OCI-LY7 (cell line): ENCODE measurements at regions of chr6 and their contacts with region 1.

Region 1: DNA sequence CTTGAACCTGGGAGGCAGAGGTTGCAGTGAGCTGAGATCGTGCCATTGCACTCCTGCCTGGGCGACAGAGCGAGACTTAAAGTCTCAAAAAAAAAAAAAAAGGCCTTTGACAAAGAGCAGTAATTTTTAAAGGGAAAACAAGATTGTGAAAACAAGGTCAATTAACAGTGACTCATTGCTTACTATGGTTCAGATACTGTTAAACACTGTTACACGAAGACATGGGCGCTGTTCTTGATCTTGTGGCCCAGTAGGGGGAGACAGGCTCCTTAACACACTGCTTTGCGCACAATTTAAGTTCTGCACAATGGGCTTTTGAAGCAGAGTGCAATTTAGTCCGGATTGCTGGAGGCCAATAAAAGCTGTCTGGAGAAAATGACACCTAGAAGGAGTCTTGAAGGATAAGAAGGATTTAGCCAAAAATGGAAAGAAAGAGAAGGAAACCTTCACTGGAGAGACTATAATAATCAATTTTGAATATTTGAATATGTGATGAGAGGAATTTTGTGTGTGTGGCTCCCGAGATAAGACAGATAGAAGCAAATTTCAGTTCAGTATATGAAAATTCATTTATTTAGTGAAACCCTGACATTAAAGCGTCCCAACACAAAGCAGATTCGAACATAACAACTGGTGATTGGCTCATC is 6.0 kb upstream of the LATS1 start:
- DNase-seq: peak; percentile 72
- H3K4me3 ChIP-seq: no peak overlapping the region
- H3K27ac ChIP-seq: no peak overlapping the region
- H3K4me1 ChIP-seq: no peaks in the 10 kb centered on the region
- CTCF ChIP-seq: peak; percentile 92

Region 2: GRCh38 chr6:149534742-149535141 is 189.2 kb before region 1 on chr6:
- CTCF ChIA-PET with region 1: no interaction called
- POLR2A ChIA-PET with region 1: no interaction called
- intact Hi-C with region 1: no loop called
- DNase-seq: no peak
- H3K4me3 ChIP-seq: no peak overlapping the region
- H3K27ac ChIP-seq: no peak overlapping the region
- H3K4me1 ChIP-seq: no peaks in the 10 kb centered on the region
- CTCF ChIP-seq: no peak

Region 3: DNA sequence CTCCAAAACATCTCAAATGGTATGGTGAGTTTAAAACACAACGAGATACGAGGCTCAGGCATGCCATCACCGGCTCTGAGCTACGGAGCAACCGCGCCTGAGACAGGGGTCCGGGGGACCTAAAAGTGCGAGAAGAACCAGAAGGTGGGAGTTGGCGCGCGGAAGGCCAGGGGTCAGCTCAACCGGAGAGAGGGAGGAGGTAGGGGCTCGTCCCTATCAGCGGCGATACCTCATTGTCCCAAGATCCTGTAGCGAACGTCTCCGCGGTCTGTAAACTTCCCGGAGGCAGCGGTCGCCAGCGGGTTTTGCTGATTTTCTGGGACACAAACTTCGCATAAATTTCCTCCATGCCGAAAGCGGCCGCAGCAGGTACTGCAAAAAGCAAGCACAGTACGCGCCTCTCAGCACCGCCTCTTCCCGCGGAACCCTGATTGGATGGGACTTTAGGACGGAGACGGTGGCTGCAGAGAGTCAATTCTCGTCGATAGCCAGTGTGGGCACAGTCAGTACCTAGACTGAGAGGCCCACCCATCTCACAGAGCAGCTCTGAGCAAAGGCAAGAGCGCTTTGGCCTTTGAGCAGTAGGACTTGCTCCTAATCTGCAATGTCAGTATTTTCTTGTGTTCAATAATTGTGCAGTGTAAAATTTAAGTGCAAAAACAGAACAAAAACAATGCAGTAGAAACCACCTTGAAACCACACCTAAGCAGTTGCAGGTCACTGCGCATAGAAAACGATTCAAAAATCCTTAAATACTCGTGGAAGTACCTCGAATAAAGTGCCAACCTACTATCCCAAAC is 22.5 kb after region 1 on chr6 and contains the start of gene NUP43:
- CTCF ChIA-PET with region 1: no interaction called
- POLR2A ChIA-PET with region 1: interaction called, 6 read pairs
- intact Hi-C with region 1: loop called (anchors 2 kb)
- DNase-seq: peak; percentile 96
- H3K4me3 ChIP-seq: peak within 1 kb of the TSS; percentile 80
- H3K27ac ChIP-seq: peak within 1 kb of the TSS; percentile 74
- H3K4me1 ChIP-seq: peaks cover 24% of the 10 kb centered on the region
- CTCF ChIP-seq: peak; percentile 67
- total RNA-seq, gene NUP43: 28.6 and 30.7 TPM in 2 replicates

Region 4: GRCh38 chr6:149823013-149823412 is 99.1 kb after region 1 on chr6:
- CTCF ChIA-PET with region 1: no interaction called
- POLR2A ChIA-PET with region 1: no interaction called
- intact Hi-C with region 1: loop called (anchors 2 kb)
- DNase-seq: peak; percentile 8
- H3K4me3 ChIP-seq: no peak overlapping the region
- H3K27ac ChIP-seq: no peak overlapping the region
- H3K4me1 ChIP-seq: no peaks in the 10 kb centered on the region
- CTCF ChIP-seq: peak; percentile 63

Region 5: GRCh38 chr6:149925974-149926777 is 202.3 kb after region 1 on chr6:
- CTCF ChIA-PET with region 1: no interaction called
- POLR2A ChIA-PET with region 1: no interaction called
- intact Hi-C with region 1: loop called (anchors 2 kb)
- DNase-seq: peak; percentile 75
- H3K4me3 ChIP-seq: peak overlapping the region; percentile 22
- H3K27ac ChIP-seq: no peak overlapping the region
- H3K4me1 ChIP-seq: peaks cover 11% of the 10 kb centered on the region
- CTCF ChIP-seq: peak; percentile 83